Activated CD8-positive, alpha-beta T cell treated with anti-CD3 and anti-CD28 coated beads for 36 hours (primary cell): ENCODE measurements at regions of chr12 and their contacts with region 1.

Region 1: DNA sequence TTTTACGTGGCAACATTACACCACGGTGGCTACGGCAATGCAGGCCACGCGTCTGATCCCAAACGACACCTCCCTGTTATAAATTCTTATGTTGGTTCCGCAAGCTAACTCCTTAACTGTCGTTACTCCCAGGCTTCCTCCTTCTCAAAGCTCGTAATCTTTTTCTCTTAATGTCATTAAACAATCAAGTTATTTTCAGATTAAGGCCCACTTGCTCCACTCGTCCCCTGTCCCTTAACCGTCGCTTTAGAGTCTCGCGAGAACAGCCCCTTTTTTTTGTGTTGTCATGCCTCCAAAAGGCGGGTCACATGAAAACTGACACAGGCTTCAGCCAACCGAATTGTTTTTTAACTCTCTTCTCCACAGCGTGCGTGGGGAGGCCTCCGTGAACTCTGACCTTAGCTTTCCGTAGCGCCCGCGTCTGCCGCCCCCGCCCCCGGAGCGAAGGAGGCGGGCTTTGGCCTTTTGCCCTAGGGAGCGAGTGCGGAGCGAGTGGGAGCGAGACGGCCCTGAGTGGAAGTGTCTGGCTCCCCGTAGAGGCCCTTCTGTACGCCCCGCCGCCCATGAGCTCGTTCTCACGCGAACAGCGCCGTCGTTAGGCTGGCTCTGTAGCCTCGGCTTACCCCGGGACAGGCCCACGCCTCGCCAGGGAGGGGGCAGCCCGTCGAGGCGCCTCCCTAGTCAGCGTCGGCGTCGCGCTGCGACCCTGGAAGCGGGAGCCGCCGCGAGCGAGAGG is at the start of gene CAND1:
- DNase-seq: peak; percentile 97
- ATAC-seq: peak; percentile 82
- H3K4me3 Mint-ChIP-seq: peak within 1 kb of the TSS; percentile 93
- H3K27ac Mint-ChIP-seq: peak within 1 kb of the TSS; percentile 100
- H3K4me1 Mint-ChIP-seq: peaks cover 34% of the 10 kb centered on the region
- H3K27me3 Mint-ChIP-seq: no peaks in the 10 kb centered on the region
- CTCF ChIP-seq: no peak
- total RNA-seq, gene CAND1: 216 to 221 TPM

Region 2: GRCh38 chr12:67161322-67161918 is 107.6 kb before region 1 on chr12:
- CTCF ChIA-PET with region 1: interaction called, 11 read pairs
- POLR2A ChIA-PET with region 1: no interaction called
- intact Hi-C with region 1: no loop called
- DNase-seq: peak; percentile 63
- ATAC-seq: no peak
- H3K4me3 Mint-ChIP-seq: no peak overlapping the region
- H3K27ac Mint-ChIP-seq: no peak overlapping the region
- H3K4me1 Mint-ChIP-seq: no peaks in the 10 kb centered on the region
- H3K27me3 Mint-ChIP-seq: peaks cover 2% of the 10 kb centered on the region
- CTCF ChIP-seq: peak; percentile 54

Region 3: DNA sequence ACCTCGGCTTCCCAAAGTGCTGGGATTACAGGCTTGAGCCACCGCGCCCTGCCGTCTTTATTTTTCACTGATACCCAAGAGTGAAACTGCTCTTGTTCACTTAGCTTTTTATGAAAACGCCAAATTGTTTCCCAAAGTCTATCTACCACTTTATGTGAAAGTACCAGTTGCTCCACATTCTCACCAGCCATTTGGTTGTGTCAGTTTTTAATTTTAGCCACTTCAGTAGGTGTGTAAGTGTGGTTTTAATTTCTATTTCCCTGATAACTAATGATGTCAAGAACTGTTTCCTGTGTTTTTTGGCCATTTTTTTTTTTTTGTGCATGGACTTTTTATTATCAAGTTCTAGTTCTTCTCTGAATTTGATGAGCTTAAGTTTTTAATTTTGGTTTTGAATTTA is 17.2 kb after region 1 on chr12:
- CTCF ChIA-PET with region 1: no interaction called
- POLR2A ChIA-PET with region 1: interaction called, 10 read pairs
- intact Hi-C with region 1: no loop called
- DNase-seq: no peak
- ATAC-seq: no peak
- H3K4me3 Mint-ChIP-seq: no peak overlapping the region
- H3K27ac Mint-ChIP-seq: no peak overlapping the region
- H3K4me1 Mint-ChIP-seq: peaks cover 60% of the 10 kb centered on the region
- H3K27me3 Mint-ChIP-seq: no peaks in the 10 kb centered on the region
- CTCF ChIP-seq: no peak